Pancreas (tissue), 10 donors: ENCODE measurements at regions of chr1 and their contacts with region 1.

Region 1: GRCh38 chr1:162056043-162056442 is 13.4 kb upstream of the NOS1AP start:
- DNase-seq: peak; percentile 44 to 76 (median 55)
- ATAC-seq: peak; percentile 89 to 100 (median 98)
- H3K4me3 ChIP-seq: no peak overlapping the region
- H3K27ac ChIP-seq: no peak overlapping the region
- H3K4me1 ChIP-seq: no peaks in the 10 kb centered on the region
- H3K27me3 ChIP-seq: no peaks in the 10 kb centered on the region
- CTCF ChIP-seq: peak; percentile 51 to 91 (median 75)

Region 2: GRCh38 chr1:162187687-162188276 is 131.7 kb after region 1 on chr1:
- intact Hi-C with region 1: no loop called
- DNase-seq: peak in 1 of 6 donors; percentile 48
- ATAC-seq: no peak
- H3K4me3 ChIP-seq: no peak overlapping the region
- H3K27ac ChIP-seq: no peak overlapping the region
- H3K4me1 ChIP-seq: peaks cover 16 to 31% (median 25%) of the 10 kb centered on the region in 3 donors
- H3K27me3 ChIP-seq: no peaks in the 10 kb centered on the region
- CTCF ChIP-seq: no peak

Region 3: DNA sequence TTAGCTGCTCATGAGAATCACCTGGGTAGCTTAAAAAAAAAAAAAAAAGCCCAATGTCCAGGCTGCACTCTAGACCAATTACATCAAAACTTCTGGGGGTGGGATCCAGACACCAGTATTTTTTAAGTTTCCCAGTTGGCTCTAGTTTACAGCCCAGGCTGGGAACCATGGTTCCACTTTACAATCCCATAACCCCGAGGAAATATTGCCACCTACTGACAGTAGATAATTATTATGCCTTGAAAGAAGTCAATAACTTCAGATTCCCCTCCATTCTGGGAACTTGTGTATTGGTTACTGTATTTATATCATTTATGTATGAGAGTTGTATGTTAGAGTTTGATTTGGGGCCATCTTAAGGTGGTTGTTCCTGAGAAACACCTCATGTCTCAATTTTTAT is 220.4 kb after region 1 on chr1:
- intact Hi-C with region 1: loop called in 2 of 3 experiments (anchors 2 to 10 kb)
- DNase-seq: no peak
- ATAC-seq: peak in 3 of 4 donors; percentile 78 to 87 (median 86)
- H3K4me3 ChIP-seq: no peak overlapping the region
- H3K27ac ChIP-seq: no peak overlapping the region
- H3K4me1 ChIP-seq: no peaks in the 10 kb centered on the region
- H3K27me3 ChIP-seq: no peaks in the 10 kb centered on the region
- CTCF ChIP-seq: peak in 1 of 4 donors; percentile 28

Region 4: GRCh38 chr1:162389021-162389818 is 333.2 kb after region 1 on chr1:
- intact Hi-C with region 1: loop called in 2 of 3 experiments (anchors 5 to 10 kb)
- DNase-seq: no peak
- ATAC-seq: no peak
- H3K4me3 ChIP-seq: no peak overlapping the region
- H3K27ac ChIP-seq: no peak overlapping the region
- H3K4me1 ChIP-seq: no peaks in the 10 kb centered on the region
- H3K27me3 ChIP-seq: no peaks in the 10 kb centered on the region
- CTCF ChIP-seq: no peak